ENCODE measurements at regions of chr3 and their contacts with region 1.

Region 1: GRCh38 chr3:141465221-141465620 is 21.6 kb upstream of the RASA2 start:
- DNase-seq: no peak
- ATAC-seq: peak in 1 of 2 experiments; percentile 40; a peak in 2 of 6 replicates
- H3K4me3 ChIP-seq: no peak overlapping the region
- H3K27ac ChIP-seq: no peak overlapping the region
- H3K4me1 ChIP-seq: no peaks in the 10 kb centered on the region
- CTCF ChIP-seq: peak; percentile 46; the same call in 2 of the 3 replicates
- EP300 ChIP-seq: no peak
- POLR2A ChIP-seq: no peak
- RAD21 ChIP-seq: peak; percentile 38 to 40

Region 2: DNA sequence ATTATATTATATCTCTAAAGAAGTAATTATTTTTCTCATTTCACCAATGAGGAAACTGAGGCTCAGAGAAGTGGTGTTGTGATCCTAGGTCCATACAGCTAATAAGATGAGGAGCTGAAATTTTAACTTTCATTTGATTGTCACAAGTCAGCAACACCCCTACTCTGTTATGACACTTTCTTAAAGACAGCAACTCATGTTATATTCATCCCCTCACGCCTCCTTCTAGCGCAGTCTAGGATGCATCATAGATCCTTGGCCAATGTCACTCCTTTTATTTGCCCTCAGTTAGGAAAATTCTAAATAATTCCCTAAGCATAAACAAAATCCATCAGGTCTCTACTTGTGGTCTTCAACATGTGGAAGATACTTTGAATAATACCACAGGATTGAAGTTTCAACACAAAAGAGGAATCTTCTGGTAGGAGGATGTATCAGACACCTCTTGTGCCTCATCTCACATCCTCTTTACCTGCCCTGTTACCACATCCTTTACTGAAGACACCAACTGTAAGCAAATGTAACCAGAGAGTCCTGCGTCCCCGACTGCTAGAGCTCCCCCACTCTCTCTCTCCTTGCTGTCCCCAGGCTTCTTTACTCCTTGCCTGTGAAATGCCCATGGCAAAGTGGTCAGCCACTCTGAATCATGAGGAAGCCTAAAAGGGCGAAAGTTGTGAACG is 733.6 kb before region 1 on chr3:
- CTCF ChIA-PET with region 1: no interaction called
- POLR2A ChIA-PET with region 1: no interaction called
- DNase-seq: no peak
- ATAC-seq: no peak
- H3K4me3 ChIP-seq: no peak overlapping the region
- H3K27ac ChIP-seq: no peak overlapping the region
- H3K4me1 ChIP-seq: no peaks in the 10 kb centered on the region
- CTCF ChIP-seq: no peak
- EP300 ChIP-seq: no peak
- POLR2A ChIP-seq: no peak
- RAD21 ChIP-seq: no peak

Region 3: GRCh38 chr3:141266797-141267555 is 198.2 kb before region 1 on chr3:
- CTCF ChIA-PET with region 1: no interaction called
- POLR2A ChIA-PET with region 1: no interaction called
- DNase-seq: no peak
- ATAC-seq: no peak
- H3K4me3 ChIP-seq: no peak overlapping the region
- H3K27ac ChIP-seq: no peak overlapping the region
- H3K4me1 ChIP-seq: no peaks in the 10 kb centered on the region
- CTCF ChIP-seq: no peak
- EP300 ChIP-seq: no peak
- POLR2A ChIP-seq: no peak
- RAD21 ChIP-seq: no peak

Region 4: DNA sequence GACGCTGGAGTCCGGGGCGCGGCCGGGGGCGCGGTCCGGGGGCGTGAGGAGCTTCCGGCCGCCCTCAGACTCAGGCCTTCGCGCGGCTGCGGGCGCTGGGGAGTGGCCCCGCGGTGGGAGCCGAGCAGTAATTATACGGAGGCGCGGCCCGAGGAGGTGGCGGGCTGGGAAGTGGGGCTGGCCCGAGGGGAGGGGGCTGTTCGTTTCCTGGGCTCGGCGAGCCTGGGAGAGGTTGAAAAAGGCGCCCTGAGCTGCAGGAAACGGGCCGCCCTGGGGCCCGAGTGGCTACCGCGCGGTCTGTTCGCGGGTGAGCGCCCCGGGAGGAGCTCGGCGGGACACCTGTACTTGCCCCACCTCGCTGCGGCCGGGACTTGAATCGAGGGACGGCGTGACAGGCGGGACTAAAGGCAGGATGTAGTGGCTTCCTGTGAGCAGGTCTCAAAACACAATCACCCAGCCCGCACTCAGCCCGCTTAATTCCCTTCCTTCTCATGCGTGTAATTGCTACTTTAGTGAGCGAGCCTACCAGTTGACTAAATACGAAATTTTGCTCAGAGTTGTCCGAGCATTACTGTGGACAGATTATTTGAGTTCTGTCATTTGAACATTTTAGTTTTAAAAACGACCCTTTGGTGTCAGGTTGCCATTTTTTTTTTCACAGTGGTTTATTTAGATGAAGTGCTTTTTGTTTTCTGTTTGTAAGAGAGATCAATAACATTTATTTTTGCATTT is 22.5 kb after region 1 on chr3:
- CTCF ChIA-PET with region 1: interaction called, 14 read pairs
- POLR2A ChIA-PET with region 1: interaction called, 10 read pairs
- DNase-seq: peak; percentile 54 to 82
- ATAC-seq: peak; percentile 72 to 81
- H3K4me3 ChIP-seq: peak overlapping the region; percentile 76
- H3K27ac ChIP-seq: peak overlapping the region; percentile 90 to 96
- H3K4me1 ChIP-seq: peaks cover 51% of the 10 kb centered on the region
- CTCF ChIP-seq: no peak
- EP300 ChIP-seq: no peak
- POLR2A ChIP-seq: peak; percentile 31
- RAD21 ChIP-seq: no peak

Region 5: GRCh38 chr3:141561426-141562034 is 96.3 kb after region 1 on chr3:
- CTCF ChIA-PET with region 1: interaction called, 337 read pairs
- POLR2A ChIA-PET with region 1: no interaction called
- DNase-seq: peak in 1 of 2 experiments; percentile 81
- ATAC-seq: peak in 1 of 2 experiments; percentile 55; a peak in 2 of 6 replicates
- H3K4me3 ChIP-seq: no peak overlapping the region
- H3K27ac ChIP-seq: peak overlapping the region in 1 of 2 experiments; percentile 39; a peak in 1 of 6 replicates
- H3K4me1 ChIP-seq: 0 out of 3 replicates have a peak, but pooled peaks cover 3% of the 10 kb centered on the region
- CTCF ChIP-seq: peak; percentile 98
- EP300 ChIP-seq: no peak
- POLR2A ChIP-seq: no peak
- RAD21 ChIP-seq: peak; percentile 98 to 99

Measured in A549 (cell line).